Right ventricle myocardium superior (tissue), 1 donor: ENCODE measurements at regions of chr5 and their contacts with region 1.

Region 1: DNA sequence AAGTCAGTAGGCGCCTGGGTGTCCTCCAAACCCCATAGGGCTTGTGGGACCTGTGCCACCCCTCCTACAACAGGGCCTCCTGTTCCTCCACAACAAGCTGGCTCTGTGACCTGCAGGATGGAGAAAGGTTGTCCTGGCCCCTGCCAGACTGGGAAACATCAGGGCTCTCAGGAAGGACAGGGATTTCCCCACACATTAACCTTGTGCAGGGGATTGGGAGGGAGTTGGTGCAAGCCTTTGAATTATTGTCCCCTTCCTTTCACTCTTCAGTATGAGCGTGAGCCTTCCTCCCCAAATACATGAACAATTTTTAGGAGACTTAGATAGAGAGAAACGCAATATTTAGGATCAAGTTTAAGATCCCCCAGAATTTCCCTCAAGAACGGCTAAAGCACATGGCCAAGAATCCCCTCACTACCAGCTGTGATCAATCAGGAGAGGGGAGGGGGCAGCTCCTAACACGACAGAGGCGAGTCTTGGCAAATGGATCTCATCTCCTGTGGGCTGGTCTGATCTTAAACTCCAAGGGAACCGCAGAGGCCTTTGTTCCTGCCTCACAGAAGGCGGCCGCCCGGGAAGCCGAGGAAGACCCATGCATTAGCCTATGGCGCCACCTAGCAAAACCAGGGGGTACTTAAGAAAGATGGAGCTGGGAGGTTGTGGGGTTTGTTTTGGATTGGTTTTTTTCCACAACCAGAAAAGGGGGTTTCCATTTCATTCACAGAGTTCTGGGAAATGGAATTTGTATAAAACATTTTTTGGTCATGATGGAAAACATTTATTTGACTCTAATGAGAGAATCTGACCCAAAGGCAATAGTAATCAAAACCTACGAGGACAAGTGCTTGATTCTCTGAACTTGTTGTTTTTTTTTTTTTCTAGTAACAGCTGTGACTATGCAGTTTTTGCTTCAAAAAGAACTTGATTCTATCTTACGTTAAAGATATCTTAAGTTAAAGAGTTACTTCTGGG is 36.1 kb upstream of the OSMR start:
- DNase-seq: peak; percentile 88
- ATAC-seq: peak; percentile 94

Region 2: DNA sequence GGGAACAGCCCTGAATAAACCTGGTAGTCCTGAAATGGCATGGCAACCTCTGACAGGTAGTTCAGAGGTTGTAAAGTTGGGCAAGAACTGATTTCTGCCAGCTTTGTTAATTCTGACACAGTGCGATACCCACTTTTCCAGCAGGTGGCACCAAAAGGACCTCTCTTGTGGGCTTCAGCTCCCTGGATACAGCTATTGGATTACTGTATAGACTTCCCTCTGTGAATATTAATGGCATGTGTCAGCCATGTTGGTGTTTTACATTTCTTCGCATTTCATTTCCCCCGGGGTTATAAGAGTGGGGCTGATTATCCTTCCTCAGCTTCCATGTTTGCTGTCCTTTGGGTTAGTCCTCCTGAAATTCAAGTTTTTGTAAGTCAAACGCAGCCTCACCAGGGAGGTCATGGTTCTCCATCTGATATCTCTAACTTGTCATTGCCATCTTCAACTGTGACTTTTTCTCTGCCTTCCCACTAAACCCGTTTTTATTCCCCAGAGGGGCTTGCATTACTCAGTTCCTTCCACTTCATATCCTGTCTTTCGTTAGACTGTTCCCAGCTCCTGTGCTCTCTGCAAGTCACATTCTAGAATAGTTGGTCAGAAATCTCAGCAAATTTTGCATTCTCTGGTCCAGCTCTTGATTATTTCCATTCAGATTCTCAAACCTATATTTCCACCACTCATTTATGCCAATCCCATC is 388.8 kb before region 1 on chr5:
- intact Hi-C with region 1: loop called (anchors 5 kb)
- DNase-seq: no peak
- ATAC-seq: peak; percentile 83

Region 3: DNA sequence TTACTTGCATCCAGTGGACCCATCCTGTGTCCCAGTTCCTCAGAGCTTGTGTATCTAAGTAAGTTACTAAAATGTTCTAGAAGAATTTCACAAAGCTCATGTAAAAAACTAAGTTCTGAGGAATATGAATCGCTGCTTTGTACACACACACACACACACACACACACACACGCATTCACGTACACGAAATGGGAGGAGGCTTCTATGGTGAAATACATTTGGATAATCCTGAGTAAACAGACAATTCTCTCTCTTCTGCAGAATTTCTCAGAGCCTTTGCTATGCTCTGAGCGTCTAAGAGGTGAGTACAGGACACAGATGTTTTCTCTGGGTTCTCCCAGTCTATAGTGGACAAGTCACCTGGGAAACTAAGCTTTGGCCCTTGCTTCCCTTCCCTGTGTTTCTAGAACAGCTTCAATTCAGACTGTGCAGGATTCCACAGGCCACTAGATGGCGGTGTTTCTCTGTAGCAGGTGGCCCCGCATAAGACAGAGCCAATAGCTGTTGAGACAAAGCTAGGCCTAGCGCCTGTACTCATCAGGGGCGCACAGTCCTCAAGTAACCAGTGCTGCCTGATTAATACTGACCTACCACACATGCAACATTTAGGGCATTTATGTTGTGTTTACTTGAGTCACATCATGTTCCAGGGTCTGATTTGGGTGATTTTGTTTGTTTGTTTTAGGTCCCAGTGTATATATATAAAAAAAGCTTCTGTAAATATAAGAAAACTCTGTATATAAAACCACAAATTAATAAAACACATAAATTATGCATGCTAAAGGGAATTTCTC is 368.0 kb before region 1 on chr5:
- intact Hi-C with region 1: loop called (anchors 5 kb)
- DNase-seq: peak; percentile 88
- ATAC-seq: peak; percentile 98

Region 4: GRCh38 chr5:38556599-38557305 is 252.9 kb before region 1 on chr5 and contains the start of gene LIFR:
- intact Hi-C with region 1: loop called (anchors 10 kb)
- DNase-seq: peak; percentile 91
- ATAC-seq: peak; percentile 90
- total RNA-seq, gene LIFR: 53.2 TPM

Region 5: GRCh38 chr5:38569180-38569579 is 240.5 kb before region 1 on chr5:
- intact Hi-C with region 1: no loop called
- DNase-seq: no peak
- ATAC-seq: no peak

Region 6: GRCh38 chr5:38607396-38607795 is 202.3 kb before region 1 on chr5:
- intact Hi-C with region 1: no loop called
- DNase-seq: no peak
- ATAC-seq: no peak

Region 7: GRCh38 chr5:38660194-38660668 is 149.4 kb before region 1 on chr5:
- intact Hi-C with region 1: no loop called
- DNase-seq: peak; percentile 44
- ATAC-seq: peak; percentile 78

Region 8: GRCh38 chr5:38672059-38672788 is 137.4 kb before region 1 on chr5:
- intact Hi-C with region 1: loop called (anchors 5 kb)
- DNase-seq: no peak
- ATAC-seq: peak; percentile 27